ENCODE measurements at regions of chr4 and their contacts with region 1.

Region 1: DNA sequence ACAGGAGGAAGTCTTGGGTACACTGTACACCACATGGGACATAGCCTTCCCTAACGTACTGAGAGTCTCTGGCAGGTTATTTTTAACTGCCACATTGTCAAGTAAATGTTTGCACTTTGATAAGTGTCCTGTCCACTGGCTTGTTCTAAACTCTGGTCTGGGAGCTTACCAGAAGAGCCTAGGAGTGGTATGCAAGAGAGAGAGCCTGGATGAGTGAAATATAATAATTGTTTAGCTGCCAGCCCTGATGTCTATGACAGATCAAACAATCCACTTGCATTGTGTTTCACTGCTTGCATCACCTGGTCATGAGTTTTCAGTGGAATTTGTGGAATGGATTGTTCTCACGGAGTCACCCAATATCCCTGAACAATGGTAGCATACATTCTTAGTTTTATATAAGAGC is 91.6 kb downstream of the SHROOM3 start:
- DNase-seq: no peak
- ATAC-seq: peak; percentile 92 to 96 (median 96)
- H3K4me3 ChIP-seq: no peak overlapping the region
- H3K27ac ChIP-seq: peak overlapping the region; percentile 12 to 83 (median 76)
- H3K4me1 ChIP-seq: peaks cover 0 to 18% (median 8%) of the 10 kb centered on the region in 12 donors
- H3K27me3 ChIP-seq: no peaks in the 10 kb centered on the region
- CTCF ChIP-seq: no peak
- POLR2A ChIP-seq: no peak

Region 2: GRCh38 chr4:76562161-76562560 is 35.6 kb after region 1 on chr4:
- intact Hi-C with region 1: loop called in 1 of 10 experiments (anchors 5 kb)
- DNase-seq: no peak
- ATAC-seq: peak; percentile 55 to 78 (median 66)
- H3K4me3 ChIP-seq: no peak overlapping the region
- H3K27ac ChIP-seq: peak overlapping the region in 11 of 12 donors; percentile 14 to 83 (median 44)
- H3K4me1 ChIP-seq: peaks cover 0 to 31% (median 11%) of the 10 kb centered on the region in 12 donors
- H3K27me3 ChIP-seq: no peaks in the 10 kb centered on the region
- CTCF ChIP-seq: no peak
- POLR2A ChIP-seq: no peak

Region 3: DNA sequence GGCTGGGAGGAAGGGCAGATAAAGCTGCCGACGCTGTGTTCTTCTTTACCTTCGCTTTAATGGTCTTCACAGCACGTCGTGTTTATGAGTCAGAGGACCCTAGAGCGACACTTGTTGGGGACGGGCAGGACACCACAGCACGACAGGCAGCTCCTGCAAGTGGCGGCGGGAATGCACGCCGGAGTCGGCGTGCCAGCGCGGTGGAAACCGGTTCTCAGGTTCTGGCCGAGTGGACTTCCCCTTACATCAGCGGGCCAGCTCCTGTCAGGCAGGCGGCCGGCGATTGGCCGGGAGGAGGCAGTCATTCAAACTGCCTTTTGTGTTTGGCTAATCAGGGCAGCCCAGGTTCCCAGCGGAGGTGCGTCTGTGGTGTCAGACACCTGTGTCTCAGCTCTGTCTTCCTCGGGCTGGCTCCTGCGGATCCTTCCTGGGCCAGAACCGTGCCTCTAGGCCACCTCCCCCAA is 59.3 kb after region 1 on chr4:
- intact Hi-C with region 1: loop called in 5 of 10 experiments (anchors 1 to 10 kb)
- DNase-seq: peak; percentile 78 to 87 (median 85)
- ATAC-seq: peak; percentile 78 to 92 (median 89)
- H3K4me3 ChIP-seq: peak overlapping the region in 11 of 12 donors; percentile 28 to 62 (median 54)
- H3K27ac ChIP-seq: peak overlapping the region in 11 of 12 donors; percentile 18 to 86 (median 75)
- H3K4me1 ChIP-seq: peaks cover 0 to 45% (median 13%) of the 10 kb centered on the region in 12 donors
- H3K27me3 ChIP-seq: peaks cover 0 to 15% (median 0%) of the 10 kb centered on the region in 9 donors
- CTCF ChIP-seq: peak in 7 of 12 donors; percentile 7 to 53 (median 38)
- POLR2A ChIP-seq: peak in 1 of 2 donors; percentile 38

Region 4: GRCh38 chr4:76658231-76659102 is 131.9 kb after region 1 on chr4:
- intact Hi-C with region 1: loop called in 1 of 10 experiments (anchors 10 kb)
- DNase-seq: no peak
- ATAC-seq: no peak
- H3K4me3 ChIP-seq: no peak overlapping the region
- H3K27ac ChIP-seq: peak overlapping the region in 1 of 12 donors; percentile 9
- H3K4me1 ChIP-seq: peaks cover 0 to 39% (median 11%) of the 10 kb centered on the region in 12 donors
- H3K27me3 ChIP-seq: no peaks in the 10 kb centered on the region
- CTCF ChIP-seq: no peak
- POLR2A ChIP-seq: no peak

Region 5: GRCh38 chr4:76738086-76738931 is 211.7 kb after region 1 on chr4:
- intact Hi-C with region 1: loop called in 1 of 10 experiments (anchors 5 kb)
- DNase-seq: peak in 3 of 5 donors; percentile 29 to 66 (median 59)
- ATAC-seq: peak; percentile 63 to 92 (median 90)
- H3K4me3 ChIP-seq: no peak overlapping the region
- H3K27ac ChIP-seq: peak overlapping the region in 9 of 12 donors; percentile 20 to 85 (median 64)
- H3K4me1 ChIP-seq: peaks cover 0 to 22% (median 10%) of the 10 kb centered on the region in 12 donors
- H3K27me3 ChIP-seq: no peaks in the 10 kb centered on the region
- CTCF ChIP-seq: no peak
- POLR2A ChIP-seq: no peak

Measured in heart left ventricle (tissue), 16 donors.